Heart right ventricle (tissue), 16 donors: ENCODE measurements at regions of chr14 and their contacts with region 1.

Region 1: DNA sequence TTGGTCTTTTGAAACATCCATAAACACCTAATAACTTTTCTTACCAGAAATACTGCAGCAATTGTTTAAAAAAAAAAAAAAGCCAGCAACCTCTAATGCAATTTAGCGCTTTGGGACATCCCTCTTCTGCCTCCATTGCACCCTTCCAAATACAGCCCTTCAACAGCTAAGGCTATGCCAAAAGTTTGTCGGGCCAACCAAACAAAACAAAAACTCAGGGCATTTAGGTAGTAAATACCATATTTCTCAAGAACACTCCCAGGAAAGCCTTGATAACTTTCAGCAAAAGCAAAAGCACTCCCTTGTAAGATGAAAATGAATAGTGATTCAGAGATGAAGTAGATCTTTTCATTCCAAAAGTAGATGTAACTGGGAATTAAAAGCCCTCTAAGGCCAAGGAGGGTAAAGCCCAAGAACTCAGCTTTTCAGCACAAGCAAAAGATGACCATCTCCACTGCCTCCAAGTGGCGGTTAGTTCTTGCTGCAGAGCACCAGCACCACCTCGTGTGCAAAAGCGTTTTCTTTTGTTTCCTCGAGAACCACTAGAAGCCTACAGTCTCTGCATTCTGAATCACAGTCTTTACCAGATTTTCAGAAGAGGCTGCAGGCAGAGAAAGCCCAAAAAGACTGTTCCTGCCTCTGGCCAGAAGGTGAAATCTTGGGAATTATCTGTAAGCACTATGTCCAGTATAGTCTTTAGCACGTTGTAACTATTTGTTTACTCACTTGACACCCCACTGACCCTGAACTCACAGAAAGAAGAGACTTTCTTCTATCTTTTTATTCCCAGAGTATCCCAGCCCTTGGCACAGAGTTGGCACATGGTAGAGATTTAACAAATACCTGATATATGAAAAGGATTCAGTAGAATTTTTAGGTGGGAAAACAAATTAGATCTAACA is 53.1 kb downstream of the SIX6 start:
- DNase-seq: peak; percentile 16 to 27
- ATAC-seq: peak; percentile 59 to 93 (median 82)
- H3K4me3 ChIP-seq: no peak overlapping the region
- H3K27ac ChIP-seq: no peak overlapping the region
- H3K4me1 ChIP-seq: peaks cover 0 to 3% (median 0%) of the 10 kb centered on the region in 9 donors
- H3K27me3 ChIP-seq: peaks cover 0 to 3% (median 0%) of the 10 kb centered on the region in 7 donors
- CTCF ChIP-seq: peak; percentile 25 to 73 (median 64)

Region 2: GRCh38 chr14:59964251-59965007 is 597.7 kb before region 1 on chr14:
- intact Hi-C with region 1: loop called in 1 of 10 experiments (anchors 10 kb)
- DNase-seq: no peak
- ATAC-seq: peak in 6 of 8 donors; percentile 12 to 35 (median 26)
- H3K4me3 ChIP-seq: no peak overlapping the region
- H3K27ac ChIP-seq: no peak overlapping the region
- H3K4me1 ChIP-seq: peaks cover 0 to 11% (median 0%) of the 10 kb centered on the region in 9 donors
- H3K27me3 ChIP-seq: no peaks in the 10 kb centered on the region
- CTCF ChIP-seq: no peak

Region 3: DNA sequence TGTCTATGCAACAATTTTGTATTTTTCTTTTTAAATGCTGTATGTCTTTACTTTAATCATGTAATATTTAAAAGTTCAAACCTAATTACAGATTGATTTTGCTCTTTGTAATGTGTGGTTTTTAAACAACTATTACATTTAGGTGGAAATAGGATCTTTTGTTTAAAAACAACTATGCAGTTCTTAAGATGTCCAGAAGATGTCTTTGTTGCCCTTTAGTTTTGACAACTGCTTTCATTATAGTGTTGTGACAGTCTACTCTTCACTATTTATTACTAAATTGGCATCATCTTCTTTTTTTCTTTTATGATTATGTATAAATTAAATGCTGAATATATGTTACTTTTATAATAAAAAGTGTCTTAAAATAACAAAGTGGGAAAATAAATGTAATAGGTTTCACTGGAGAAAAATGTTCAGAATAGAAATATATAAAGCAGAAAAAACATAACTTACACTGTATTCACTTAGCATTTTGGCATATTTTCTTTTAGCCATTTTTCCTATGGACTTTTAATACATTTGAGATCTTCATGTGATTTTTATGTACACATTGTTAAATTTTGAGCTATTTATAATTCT is 497.5 kb before region 1 on chr14:
- intact Hi-C with region 1: loop called in 2 of 10 experiments (anchors 10 kb)
- DNase-seq: no peak
- ATAC-seq: no peak
- H3K4me3 ChIP-seq: no peak overlapping the region
- H3K27ac ChIP-seq: no peak overlapping the region
- H3K4me1 ChIP-seq: no peaks in the 10 kb centered on the region
- H3K27me3 ChIP-seq: no peaks in the 10 kb centered on the region
- CTCF ChIP-seq: peak; percentile 37 to 78 (median 63)

Region 4: DNA sequence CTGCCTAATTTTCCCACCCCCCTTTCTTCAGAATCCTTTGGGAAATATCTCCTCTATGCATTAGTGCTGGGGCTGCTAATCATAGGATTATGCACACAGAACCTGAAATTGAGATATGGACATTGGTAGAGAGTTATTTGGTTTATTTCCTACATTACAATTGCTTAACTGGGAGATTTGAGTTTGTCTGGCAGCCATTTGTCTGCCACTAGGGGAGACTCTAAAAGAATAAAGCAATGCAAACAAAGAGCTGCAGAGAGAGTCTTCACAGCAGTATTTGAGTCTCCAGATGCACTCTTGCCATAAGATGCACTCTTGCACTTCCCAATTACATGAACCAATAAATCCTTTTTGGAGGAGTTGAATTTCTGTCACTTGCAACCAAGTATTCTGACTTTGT is 482.4 kb before region 1 on chr14:
- intact Hi-C with region 1: no loop called
- DNase-seq: no peak
- ATAC-seq: no peak
- H3K4me3 ChIP-seq: no peak overlapping the region
- H3K27ac ChIP-seq: no peak overlapping the region
- H3K4me1 ChIP-seq: no peaks in the 10 kb centered on the region
- H3K27me3 ChIP-seq: no peaks in the 10 kb centered on the region
- CTCF ChIP-seq: no peak

Region 5: DNA sequence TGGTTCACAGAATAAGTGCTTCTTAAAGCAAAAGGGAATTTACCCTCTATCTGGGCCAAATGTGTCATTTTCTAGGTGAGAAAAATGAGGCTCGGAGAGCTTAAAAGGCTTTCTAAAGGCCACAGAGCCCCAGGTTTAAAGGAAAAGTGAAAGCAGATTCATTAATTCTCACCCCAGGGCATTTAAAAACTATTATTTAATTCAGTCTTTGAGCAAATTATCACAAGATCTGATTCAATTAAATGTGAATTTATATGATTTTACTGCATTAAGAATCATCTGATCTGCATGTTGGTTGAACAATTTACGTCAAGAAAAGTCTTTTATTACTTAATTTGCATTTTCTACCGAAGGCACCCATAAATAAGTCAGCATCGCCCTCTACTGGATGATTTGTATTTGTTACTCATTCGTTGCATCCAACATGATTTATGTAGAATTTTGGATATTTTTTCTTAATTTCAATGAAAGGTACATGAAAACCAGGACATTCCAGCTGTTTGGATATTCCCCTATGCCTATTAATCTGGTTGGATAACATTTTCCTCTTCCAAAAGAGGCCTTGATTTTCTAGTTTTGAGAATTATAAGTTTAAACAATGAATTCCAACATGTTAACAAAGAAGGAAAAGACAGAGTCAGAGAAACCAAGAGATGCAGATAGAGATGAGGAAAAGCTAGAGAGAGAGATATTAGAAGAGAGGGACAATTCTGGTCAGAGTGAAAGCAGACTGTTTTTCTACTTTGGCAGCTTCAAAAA is 377.8 kb before region 1 on chr14:
- intact Hi-C with region 1: loop called in 2 of 10 experiments (anchors 5 kb)
- DNase-seq: peak in 1 of 2 donors; percentile 32
- ATAC-seq: peak in 4 of 8 donors; percentile 34 to 63 (median 58)
- H3K4me3 ChIP-seq: peak overlapping the region in 9 of 10 donors; percentile 30 to 62 (median 50)
- H3K27ac ChIP-seq: peak overlapping the region in 6 of 10 donors; percentile 18 to 74 (median 42)
- H3K4me1 ChIP-seq: peaks cover 0 to 9% (median 0%) of the 10 kb centered on the region in 9 donors
- H3K27me3 ChIP-seq: no peaks in the 10 kb centered on the region
- CTCF ChIP-seq: peak; percentile 61 to 93 (median 80)

Region 6: DNA sequence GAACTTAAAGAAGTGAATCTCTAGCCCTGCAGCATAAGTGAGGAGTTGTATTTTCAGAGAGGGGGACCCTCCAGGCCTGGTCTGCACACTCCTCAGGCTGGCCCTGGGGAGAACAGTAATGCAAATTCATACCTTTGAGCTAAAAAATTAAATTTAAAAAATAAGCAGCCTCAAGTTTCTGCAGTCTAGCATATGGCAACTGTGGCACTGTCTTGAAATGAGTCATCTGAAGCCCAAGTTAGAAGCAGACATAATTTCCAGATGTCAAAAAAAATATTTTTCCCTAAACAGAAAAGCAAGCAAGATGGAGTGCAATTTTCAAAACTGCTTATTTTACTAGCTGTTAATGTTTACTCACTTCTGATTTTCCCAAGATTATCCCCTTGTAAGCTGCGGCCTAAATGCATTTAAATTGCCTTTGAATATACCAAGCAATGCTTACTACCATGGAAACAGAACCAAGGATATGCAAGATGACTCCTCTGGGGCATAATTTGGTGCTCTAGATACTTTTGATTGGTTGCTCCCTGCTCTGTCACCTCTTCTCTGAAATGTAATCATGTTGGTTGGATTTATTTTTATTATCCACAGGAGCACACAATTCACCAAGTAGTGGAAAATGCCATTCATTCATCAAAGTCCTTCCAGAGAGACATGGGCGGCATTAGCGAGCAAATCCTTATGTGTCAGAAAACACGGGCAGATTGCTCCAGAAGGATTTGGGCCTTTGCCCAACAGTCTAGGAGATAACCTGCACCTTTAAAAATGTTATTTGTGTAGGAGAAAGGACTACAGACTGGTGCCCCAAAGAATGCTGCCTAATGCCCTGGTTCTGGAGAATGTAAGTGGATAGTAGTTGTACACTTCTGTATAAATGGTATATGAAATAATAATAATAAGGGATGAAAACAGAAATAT is 371.9 kb before region 1 on chr14:
- intact Hi-C with region 1: loop called in 7 of 10 experiments (anchors 5 to 10 kb)
- DNase-seq: no peak
- ATAC-seq: no peak
- H3K4me3 ChIP-seq: no peak overlapping the region
- H3K27ac ChIP-seq: no peak overlapping the region
- H3K4me1 ChIP-seq: no peaks in the 10 kb centered on the region
- H3K27me3 ChIP-seq: no peaks in the 10 kb centered on the region
- CTCF ChIP-seq: no peak

Region 7: DNA sequence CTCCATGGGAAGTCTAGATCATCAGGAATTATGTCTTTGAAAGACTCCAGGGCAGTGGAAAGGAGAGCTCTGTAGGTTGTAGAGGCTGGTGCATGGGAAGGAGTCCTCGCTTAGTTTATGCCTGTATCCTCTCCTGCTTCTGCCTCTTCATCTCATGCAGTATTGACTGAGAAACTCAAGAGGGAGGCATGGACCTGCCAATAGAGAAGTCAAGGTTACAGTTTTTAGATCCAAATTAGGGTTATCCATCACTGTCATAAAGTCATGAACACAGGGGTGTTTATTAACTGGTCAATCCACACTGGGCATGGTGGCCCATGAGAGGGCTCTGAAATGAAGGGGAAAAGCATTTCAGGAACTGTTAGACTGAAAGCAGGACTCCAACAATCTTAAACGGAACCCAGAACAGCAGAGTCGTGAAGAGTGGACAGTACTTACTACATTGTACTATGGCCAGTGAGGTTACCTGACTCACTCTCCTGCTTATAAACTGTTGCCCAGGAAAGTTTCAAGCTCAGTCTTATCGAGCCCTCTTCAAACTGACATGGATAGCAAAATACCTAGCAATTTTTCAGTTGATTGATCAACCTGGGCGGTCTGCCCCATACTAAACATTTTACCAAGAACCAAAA is 366.8 kb before region 1 on chr14:
- intact Hi-C with region 1: loop called in 6 of 10 experiments (anchors 5 to 10 kb)
- DNase-seq: no peak
- ATAC-seq: peak in 5 of 8 donors; percentile 34 to 63 (median 52)
- H3K4me3 ChIP-seq: no peak overlapping the region
- H3K27ac ChIP-seq: no peak overlapping the region
- H3K4me1 ChIP-seq: peaks cover 0 to 6% (median 0%) of the 10 kb centered on the region in 9 donors
- H3K27me3 ChIP-seq: no peaks in the 10 kb centered on the region
- CTCF ChIP-seq: peak in 7 of 9 donors; percentile 15 to 52 (median 47)

Region 8: DNA sequence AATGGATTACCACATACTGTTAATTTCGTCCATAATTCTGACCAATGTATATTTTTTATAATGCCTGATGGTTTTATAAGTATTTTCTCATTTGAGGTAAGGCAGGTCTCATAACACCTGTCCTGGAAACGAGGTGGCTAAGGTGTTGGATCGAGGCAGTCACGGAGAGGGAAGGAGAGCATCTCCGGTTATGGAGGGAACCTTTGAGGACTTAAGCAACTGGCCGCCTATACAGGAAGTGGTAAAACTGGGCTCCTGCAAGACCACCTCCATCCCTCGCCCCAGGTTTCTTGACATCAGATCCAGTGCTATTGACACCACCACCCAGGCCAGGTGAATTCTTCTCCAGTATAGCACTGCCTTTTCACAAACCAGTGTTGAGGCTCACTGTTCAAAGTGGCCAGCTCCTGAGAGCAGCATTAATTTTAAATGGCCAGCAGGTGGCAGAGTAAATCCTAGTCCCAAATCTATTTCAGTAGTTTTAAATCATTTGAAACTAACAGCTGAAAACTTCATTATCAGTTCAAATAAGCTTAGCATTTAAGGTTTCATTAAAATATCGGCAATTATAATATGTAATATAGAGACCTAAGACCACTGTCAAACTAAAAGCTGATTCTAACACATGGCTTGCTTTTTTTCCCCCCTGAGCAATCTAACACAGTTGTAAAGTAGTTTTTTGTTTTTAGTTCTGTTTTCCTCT is 212.3 kb before region 1 on chr14:
- intact Hi-C with region 1: loop called (anchors 2 to 10 kb)
- DNase-seq: peak in 1 of 2 donors; percentile 26
- ATAC-seq: peak in 3 of 8 donors; percentile 51 to 73 (median 65)
- H3K4me3 ChIP-seq: peak overlapping the region in 2 of 10 donors; percentile 15 to 27
- H3K27ac ChIP-seq: no peak overlapping the region
- H3K4me1 ChIP-seq: peaks cover 0 to 7% (median 5%) of the 10 kb centered on the region in 9 donors
- H3K27me3 ChIP-seq: peaks cover 0 to 6% (median 0%) of the 10 kb centered on the region in 7 donors
- CTCF ChIP-seq: peak; percentile 41 to 73 (median 67)